Activated B cell treated with CpG ODN at 0.5 μM for 24 hours (primary cell): ENCODE measurements at regions of chr7 and their contacts with region 1.

Region 1: DNA sequence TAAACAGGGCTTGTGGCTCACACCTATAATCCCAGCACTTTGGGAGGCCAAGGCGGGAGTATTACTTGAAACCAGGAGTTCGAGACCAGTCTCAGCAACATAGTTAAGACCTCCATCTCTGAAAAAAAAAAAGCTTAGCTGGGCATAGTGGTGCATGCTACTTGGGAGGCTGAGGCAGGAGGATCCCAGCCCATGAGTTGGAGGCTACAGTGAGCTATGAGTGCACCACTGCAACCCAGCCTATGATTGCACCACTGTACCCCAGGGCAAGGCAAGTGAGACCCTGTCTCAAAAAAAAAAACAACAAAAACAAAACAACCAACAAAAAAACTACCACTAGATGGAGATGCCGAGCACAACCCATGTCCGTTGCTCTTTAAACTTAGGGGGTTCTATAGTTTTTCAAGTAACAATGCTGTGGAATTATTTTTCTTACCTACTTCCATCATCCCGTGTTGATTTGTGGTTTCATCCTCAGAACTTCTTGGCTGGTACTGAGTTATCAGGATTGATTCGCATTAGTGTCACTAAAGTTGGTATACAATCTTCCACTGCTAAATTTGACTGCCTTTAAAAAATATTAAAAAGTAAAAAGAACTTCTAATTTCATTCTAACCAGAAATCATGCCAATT is 12.2 kb upstream of the REPIN1 start:
- DNase-seq: no peak
- ATAC-seq: peak; percentile 57
- H3K4me3 Mint-ChIP-seq: no peak overlapping the region
- H3K27ac Mint-ChIP-seq: no peak overlapping the region
- H3K4me1 Mint-ChIP-seq: peaks cover 16% of the 10 kb centered on the region
- H3K27me3 Mint-ChIP-seq: no peaks in the 10 kb centered on the region
- CTCF ChIP-seq: peak; percentile 31

Region 2: DNA sequence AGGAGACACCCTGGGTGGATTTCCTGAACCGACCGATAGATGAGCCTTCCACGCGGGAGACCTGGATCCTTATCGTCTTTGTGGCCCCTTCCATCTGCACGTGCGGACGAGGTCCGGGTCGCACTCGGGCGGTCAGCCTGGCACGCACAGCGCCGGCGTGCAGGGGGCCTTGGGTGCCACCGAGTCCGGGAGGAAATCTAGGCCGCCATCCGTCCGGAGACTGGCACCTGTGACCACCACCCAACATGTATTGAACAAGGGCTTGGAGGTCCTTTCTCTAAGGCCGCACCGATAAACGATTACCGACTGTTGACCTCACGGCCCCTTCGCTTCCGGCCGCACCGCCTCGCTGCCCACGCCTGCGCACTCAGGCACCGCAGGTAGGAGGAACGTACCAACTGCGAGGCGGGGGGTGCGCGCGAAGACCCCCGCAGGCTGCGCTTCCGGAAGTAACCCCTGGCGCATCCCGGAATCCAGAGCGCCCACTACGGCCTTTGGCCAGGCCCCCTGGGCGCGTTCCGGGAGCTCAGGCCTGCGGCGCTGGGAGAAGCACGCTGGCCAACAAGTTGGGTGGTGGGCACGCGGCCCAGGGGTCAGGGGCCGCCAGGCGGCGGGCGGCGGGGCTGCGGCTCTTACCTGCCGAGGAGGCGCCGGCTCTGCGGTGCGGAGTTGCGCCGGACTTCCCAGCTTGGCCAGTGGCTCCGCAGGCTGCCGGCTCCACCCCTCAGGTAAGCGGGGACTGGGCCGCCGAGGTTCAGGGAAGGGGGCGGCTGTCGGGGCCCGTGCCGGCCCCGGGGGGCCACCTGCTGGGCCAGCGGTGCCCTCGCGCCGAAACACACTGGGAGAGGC is 33.3 kb before region 1 on chr7 and contains the starts of genes ACTR3C and LRRC61:
- CTCF ChIA-PET with region 1: no interaction called
- POLR2A ChIA-PET with region 1: no interaction called
- intact Hi-C with region 1: loop called (anchors 2 kb)
- DNase-seq: peak; percentile 64
- ATAC-seq: peak; percentile 67
- H3K4me3 Mint-ChIP-seq: peak within 1 kb of the TSS; percentile 93
- H3K27ac Mint-ChIP-seq: peak within 1 kb of the TSS; percentile 92
- H3K4me1 Mint-ChIP-seq: peaks cover 54% of the 10 kb centered on the region
- H3K27me3 Mint-ChIP-seq: no peaks in the 10 kb centered on the region
- CTCF ChIP-seq: no peak
- total RNA-seq, gene ACTR3C: 10.1 and 14.3 TPM in 2 replicates
- total RNA-seq, gene LRRC61: 10.7 and 11.0 TPM in 2 replicates

Region 3: DNA sequence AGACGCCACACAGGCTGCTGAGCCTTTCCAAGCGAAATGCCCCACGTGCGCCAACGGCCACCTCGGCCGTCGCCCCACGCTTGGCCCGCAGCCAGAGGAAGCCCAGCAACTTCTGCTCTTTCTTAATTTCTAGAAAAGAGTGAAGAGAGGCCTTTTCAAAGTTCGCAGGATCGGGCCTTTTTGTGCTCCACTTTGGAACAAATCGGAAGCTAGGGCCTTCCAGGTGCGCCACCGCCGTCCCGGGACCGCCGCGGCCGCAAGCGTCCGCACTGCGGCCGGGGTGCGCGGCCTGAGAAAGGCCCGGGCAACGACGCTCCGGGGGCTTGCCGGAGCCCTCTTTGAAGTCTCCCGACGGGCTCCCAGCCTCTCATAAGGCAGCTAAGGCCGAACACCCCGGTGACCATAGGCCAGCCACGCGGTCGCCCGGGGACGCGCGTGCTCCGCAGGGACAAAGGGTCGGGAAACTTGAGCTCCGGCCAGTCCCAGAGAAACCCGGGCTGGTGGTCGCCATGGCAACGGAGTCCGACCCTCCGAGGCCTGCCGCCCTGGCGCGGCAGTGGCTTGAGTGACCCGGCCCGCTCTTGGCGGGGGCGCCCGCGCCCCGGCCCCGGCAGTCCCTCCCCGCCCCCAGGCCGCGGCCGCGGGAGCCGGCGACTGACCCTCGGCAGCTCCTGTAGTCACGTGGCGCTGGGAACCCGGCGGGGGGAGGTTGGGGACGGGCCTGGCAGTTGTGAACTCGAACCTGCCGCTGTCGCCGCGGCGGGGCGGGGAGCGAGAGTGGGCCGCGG is 11.9 kb after region 1 on chr7 and contains the start of gene REPIN1:
- CTCF ChIA-PET with region 1: interaction called, 6 read pairs
- POLR2A ChIA-PET with region 1: interaction called, 25 read pairs
- intact Hi-C with region 1: loop called (anchors 1 kb)
- DNase-seq: peak; percentile 85
- ATAC-seq: peak; percentile 43
- H3K4me3 Mint-ChIP-seq: peak within 1 kb of the TSS; percentile 95
- H3K27ac Mint-ChIP-seq: peak within 1 kb of the TSS; percentile 95
- H3K4me1 Mint-ChIP-seq: peaks cover 72% of the 10 kb centered on the region
- H3K27me3 Mint-ChIP-seq: no peaks in the 10 kb centered on the region
- CTCF ChIP-seq: no peak
- total RNA-seq, gene REPIN1: 106 and 116 TPM in 2 replicates

Region 4: DNA sequence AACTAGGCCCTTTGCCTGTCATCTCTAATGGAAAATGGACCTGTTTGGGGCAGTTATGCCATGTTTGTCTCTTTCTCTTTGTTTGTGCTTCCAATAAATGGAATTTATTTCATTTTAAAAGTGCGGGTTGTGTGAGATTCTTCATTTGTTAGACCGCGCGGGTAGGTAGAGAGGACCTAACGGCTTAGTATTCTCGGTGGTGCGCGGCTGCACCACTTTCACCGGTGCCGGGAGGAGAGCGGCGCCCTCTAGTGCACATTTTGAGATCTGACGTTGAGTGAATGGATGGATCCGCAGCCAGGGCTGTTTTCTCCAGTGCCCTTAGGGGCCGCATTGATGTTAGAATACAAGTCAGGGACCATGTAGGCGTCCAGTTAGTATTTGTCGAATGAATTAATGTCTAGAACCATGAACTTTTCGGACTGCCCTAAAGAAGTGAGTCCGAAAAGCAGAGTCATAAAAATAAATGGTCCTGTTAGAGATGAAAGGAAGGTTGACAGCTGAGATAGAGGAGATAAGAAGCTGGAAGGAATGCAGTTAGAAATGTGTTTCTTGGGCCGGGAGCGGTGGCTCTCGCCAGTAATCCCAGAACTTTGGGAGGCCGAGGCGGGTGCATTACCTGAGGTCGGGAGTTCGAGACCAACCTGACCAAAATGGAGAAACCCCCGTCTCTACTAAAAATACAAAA is 64.8 kb after region 1 on chr7:
- CTCF ChIA-PET with region 1: interaction called, 24 read pairs
- POLR2A ChIA-PET with region 1: interaction called, 4 read pairs
- intact Hi-C with region 1: loop called (anchors 1 kb)
- DNase-seq: peak; percentile 69
- ATAC-seq: peak; percentile 98
- H3K4me3 Mint-ChIP-seq: peak overlapping the region; percentile 47
- H3K27ac Mint-ChIP-seq: peak overlapping the region; percentile 19
- H3K4me1 Mint-ChIP-seq: peaks cover 7% of the 10 kb centered on the region
- H3K27me3 Mint-ChIP-seq: peaks cover 7% of the 10 kb centered on the region
- CTCF ChIP-seq: peak; percentile 94

Region 5: GRCh38 chr7:150481186-150481920 is 125.0 kb after region 1 on chr7:
- CTCF ChIA-PET with region 1: no interaction called
- POLR2A ChIA-PET with region 1: no interaction called
- intact Hi-C with region 1: no loop called
- DNase-seq: no peak
- ATAC-seq: no peak
- H3K4me3 Mint-ChIP-seq: no peak overlapping the region
- H3K27ac Mint-ChIP-seq: no peak overlapping the region
- H3K4me1 Mint-ChIP-seq: peaks cover 17% of the 10 kb centered on the region
- H3K27me3 Mint-ChIP-seq: peaks cover 8% of the 10 kb centered on the region
- CTCF ChIP-seq: no peak

Region 6: DNA sequence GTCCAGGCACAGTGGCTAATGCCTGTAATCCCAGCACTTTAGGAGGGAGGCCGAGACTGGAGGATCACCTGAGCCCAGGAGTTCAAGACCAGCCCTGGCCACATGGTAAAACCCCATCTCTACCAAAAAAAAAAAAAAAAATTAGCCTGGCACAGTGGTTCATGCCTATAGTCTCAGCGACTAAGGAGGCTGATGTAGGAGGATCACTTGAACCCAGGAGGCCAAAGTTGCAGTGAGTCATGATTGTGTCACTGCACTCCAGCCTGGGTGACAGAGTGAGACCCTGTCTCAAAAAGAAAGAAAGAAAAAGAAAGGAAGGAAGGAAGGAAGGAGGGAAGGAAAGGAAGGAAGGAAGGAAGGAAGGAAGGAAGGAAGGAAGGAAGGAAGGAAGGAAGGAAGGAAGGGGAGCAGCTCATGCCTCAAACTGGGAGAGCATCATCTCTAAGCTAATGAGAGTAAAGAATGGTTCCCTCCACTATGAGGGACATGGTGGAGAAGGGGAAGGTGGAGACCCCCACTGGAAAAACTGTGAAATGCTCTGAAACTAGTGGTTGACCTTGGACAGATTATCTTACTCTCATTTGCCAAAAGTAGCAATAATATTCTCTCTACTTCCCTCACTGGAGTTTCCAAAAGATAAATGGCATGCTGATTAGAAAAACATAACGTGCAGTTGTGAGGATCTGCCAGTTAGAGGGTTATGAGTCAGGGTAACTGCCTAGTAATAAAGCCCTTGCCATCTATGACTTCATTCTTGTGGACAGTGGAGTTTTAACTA is 397.6 kb after region 1 on chr7:
- CTCF ChIA-PET with region 1: no interaction called
- POLR2A ChIA-PET with region 1: no interaction called
- intact Hi-C with region 1: loop called (anchors 10 kb)
- DNase-seq: no peak
- ATAC-seq: no peak
- H3K4me3 Mint-ChIP-seq: no peak overlapping the region
- H3K27ac Mint-ChIP-seq: no peak overlapping the region
- H3K4me1 Mint-ChIP-seq: peaks cover 4% of the 10 kb centered on the region
- H3K27me3 Mint-ChIP-seq: peaks cover 11% of the 10 kb centered on the region
- CTCF ChIP-seq: no peak